CD8-positive, alpha-beta T cell (primary cell): ENCODE measurements at regions of chr1 and their contacts with region 1.

Region 1: DNA sequence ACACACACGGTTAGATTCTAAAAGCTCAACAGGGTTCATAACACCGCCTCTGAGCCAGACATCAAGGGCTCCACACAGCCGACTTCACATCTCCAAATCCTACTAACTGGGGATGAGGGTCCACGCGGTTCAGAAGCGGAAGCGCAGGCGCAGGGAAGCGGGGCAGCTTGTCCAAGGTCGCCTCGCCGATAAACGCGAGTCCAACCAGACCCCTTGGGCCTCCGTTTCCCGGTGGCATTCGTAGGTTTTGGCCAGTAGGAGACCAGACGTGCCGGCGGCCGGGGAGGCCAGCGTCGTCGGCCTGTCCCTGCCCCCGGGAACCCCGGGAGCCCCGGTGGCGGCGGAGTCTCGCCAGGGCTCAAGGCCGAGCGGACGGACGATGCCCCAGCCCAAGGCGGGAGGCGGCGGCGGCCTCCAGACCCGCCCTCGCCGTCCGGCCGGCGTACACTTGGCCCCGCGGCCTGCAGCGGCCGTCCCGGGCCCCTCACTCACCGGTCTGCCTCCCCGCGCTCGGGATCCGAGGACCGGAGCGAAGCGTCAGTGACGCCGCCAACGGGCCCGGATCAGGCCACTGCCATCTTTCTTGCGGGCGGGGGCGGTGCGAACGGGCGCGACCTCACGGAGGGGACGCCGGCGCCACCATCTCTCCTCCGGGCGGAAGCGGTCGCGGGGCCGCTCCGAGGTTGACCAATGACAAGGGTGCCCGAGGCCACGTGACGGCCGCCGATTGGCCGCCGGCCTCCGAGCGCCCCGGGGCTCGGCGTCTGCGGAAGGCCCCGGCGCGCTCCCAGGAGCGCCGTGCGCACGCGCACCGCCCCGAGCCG is at the start of gene SDF4:
- DNase-seq: peak; percentile 91 to 99 (median 96)
- ATAC-seq: peak; percentile 93
- H3K4me3 ChIP-seq: peak within 1 kb of the TSS; percentile 92 to 96
- H3K4me3 Mint-ChIP-seq: peak within 1 kb of the TSS; percentile 93
- H3K27ac ChIP-seq: peak within 1 kb of the TSS; percentile 80 to 88
- H3K27ac Mint-ChIP-seq: peak within 1 kb of the TSS; percentile 92
- H3K4me1 ChIP-seq: peaks cover 40% of the 10 kb centered on the region
- H3K4me1 Mint-ChIP-seq: peaks cover 39% of the 10 kb centered on the region
- H3K27me3 ChIP-seq: no peaks in the 10 kb centered on the region
- H3K27me3 Mint-ChIP-seq: no peaks in the 10 kb centered on the region
- CTCF ChIP-seq: no peak
- total RNA-seq, gene SDF4: 66.6 to 70.3 TPM

Region 2: GRCh38 chr1:1157914-1158710 is 73.5 kb before region 1 on chr1:
- CTCF ChIA-PET with region 1: no interaction called
- POLR2A ChIA-PET with region 1: no interaction called
- intact Hi-C with region 1: loop called in 1 of 2 experiments (anchors 1 kb)
- DNase-seq: peak in 5 of 9 experiments; percentile 36 to 75 (median 58)
- ATAC-seq: peak; percentile 75
- H3K4me3 ChIP-seq: peak overlapping the region; percentile 71 to 90
- H3K4me3 Mint-ChIP-seq: peak overlapping the region; percentile 78
- H3K27ac ChIP-seq: peak overlapping the region; percentile 70 to 87
- H3K27ac Mint-ChIP-seq: no peak overlapping the region
- H3K4me1 ChIP-seq: peaks cover 10% of the 10 kb centered on the region
- H3K4me1 Mint-ChIP-seq: peaks cover 2% of the 10 kb centered on the region
- H3K27me3 ChIP-seq: no peaks in the 10 kb centered on the region
- H3K27me3 Mint-ChIP-seq: no peaks in the 10 kb centered on the region
- CTCF ChIP-seq: no peak

Region 3: DNA sequence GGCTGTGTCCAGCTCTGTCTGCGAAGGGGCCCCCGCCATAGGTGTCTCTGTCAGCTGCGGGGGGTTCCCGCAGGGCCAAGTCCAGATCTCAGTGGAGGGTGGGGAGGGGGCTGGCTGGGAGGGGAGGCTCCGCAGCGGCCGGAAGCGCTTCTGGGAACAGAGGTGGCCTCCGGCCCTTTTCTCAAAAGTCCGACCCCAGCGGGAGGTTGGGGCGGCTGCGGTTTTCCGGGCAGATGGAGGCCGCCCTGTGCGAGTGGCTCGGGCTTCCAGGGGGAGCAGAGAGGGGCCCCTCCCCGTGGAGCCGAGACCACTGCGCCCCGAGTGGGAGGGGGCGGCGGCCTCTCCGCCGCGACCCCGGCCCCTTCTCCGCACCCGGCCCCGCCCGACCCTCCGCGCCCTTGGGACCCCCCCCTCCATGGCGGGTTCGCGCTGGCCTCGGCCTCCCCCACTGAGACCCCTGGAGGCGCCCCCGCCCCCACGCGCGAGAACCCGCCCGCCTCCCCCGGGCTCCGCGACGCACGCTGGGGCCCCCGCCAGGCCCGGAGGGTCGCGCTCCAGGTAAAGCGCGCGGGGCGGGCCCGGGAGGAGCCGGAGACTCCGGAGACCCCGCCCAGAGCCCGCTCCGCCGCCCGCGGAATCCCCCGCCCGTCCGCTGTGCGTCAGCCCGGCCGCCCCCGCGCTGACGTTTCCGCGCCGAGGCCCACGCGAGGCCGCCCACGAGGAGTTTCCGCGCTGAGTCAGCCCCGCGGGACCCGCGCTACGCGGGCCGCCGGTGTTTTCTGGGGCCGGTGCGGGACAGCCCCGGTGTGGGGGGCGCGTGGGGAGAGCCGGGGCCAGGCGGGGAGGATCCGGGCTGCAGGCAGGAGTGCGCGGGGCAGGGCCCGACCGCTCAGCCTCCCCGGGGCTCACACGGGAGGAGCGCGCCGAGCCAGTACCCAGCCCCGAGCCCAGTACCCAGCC is 30.5 kb before region 1 on chr1:
- CTCF ChIA-PET with region 1: no interaction called
- POLR2A ChIA-PET with region 1: no interaction called
- intact Hi-C with region 1: loop called in 1 of 2 experiments (anchors 1 kb)
- DNase-seq: peak; percentile 64 to 96 (median 82)
- ATAC-seq: peak; percentile 88
- H3K4me3 ChIP-seq: peak overlapping the region; percentile 15 to 28
- H3K4me3 Mint-ChIP-seq: peak overlapping the region; percentile 55
- H3K27ac ChIP-seq: peak overlapping the region in 1 of 2 experiments; percentile 54
- H3K27ac Mint-ChIP-seq: no peak overlapping the region
- H3K4me1 ChIP-seq: peaks cover 12% of the 10 kb centered on the region
- H3K4me1 Mint-ChIP-seq: peaks cover 3% of the 10 kb centered on the region
- H3K27me3 ChIP-seq: peaks cover 0 to 10% of the 10 kb centered on the region in 2 experiments
- H3K27me3 Mint-ChIP-seq: no peaks in the 10 kb centered on the region
- CTCF ChIP-seq: no peak

Region 4: DNA sequence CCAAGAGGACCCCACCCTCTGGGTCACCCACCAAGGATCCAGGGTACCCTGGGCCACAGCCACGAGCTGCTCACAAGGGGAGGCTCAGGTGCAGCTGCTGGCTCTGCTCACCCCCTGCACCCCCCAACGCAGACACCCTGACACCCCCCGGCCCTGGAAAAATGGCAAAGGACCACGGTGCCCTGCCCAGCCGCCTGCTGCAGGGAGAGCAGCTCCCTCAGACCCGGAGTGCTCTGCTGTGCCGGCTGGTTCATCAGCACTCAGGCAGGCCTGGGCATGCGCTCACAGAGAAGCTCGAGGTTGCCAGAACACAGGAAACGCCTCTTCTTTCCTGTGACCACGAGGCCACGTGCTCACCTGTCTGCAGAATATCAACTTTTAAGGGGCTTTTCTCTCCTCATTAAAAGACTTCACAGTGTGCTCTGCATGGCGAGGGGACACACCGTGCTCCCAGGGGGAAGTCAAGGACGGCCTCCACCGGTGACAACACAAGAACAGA is 19.2 kb after region 1 on chr1:
- CTCF ChIA-PET with region 1: no interaction called
- POLR2A ChIA-PET with region 1: interaction called, 3 read pairs
- intact Hi-C with region 1: loop called (anchors 1 to 2 kb)
- DNase-seq: peak; percentile 30 to 91 (median 74)
- ATAC-seq: peak; percentile 99
- H3K4me3 ChIP-seq: peak overlapping the region in 1 of 2 experiments; percentile 10
- H3K4me3 Mint-ChIP-seq: peak overlapping the region; percentile 72
- H3K27ac ChIP-seq: peak overlapping the region; percentile 40 to 63
- H3K27ac Mint-ChIP-seq: peak overlapping the region; percentile 93
- H3K4me1 ChIP-seq: peaks cover 25% of the 10 kb centered on the region
- H3K4me1 Mint-ChIP-seq: peaks cover 15% of the 10 kb centered on the region
- H3K27me3 ChIP-seq: peaks cover 0 to 6% of the 10 kb centered on the region in 2 experiments
- H3K27me3 Mint-ChIP-seq: no peaks in the 10 kb centered on the region
- CTCF ChIP-seq: no peak

Region 5: GRCh38 chr1:1273512-1274298 is 42.1 kb after region 1 on chr1 and contains the start of gene UBE2J2:
- CTCF ChIA-PET with region 1: no interaction called
- POLR2A ChIA-PET with region 1: interaction called, 6 read pairs
- intact Hi-C with region 1: loop called in 1 of 2 experiments (anchors 1 kb)
- DNase-seq: peak; percentile 86 to 96 (median 93)
- ATAC-seq: peak; percentile 95
- H3K4me3 ChIP-seq: peak within 1 kb of the TSS; percentile 69 to 91
- H3K4me3 Mint-ChIP-seq: peak within 1 kb of the TSS; percentile 88
- H3K27ac ChIP-seq: peak within 1 kb of the TSS; percentile 53 to 63
- H3K27ac Mint-ChIP-seq: peak within 1 kb of the TSS; percentile 89
- H3K4me1 ChIP-seq: peaks cover 39% of the 10 kb centered on the region
- H3K4me1 Mint-ChIP-seq: peaks cover 40% of the 10 kb centered on the region
- H3K27me3 ChIP-seq: no peaks in the 10 kb centered on the region
- H3K27me3 Mint-ChIP-seq: no peaks in the 10 kb centered on the region
- CTCF ChIP-seq: no peak
- total RNA-seq, gene UBE2J2: 46.4 to 50.7 TPM

Region 6: DNA sequence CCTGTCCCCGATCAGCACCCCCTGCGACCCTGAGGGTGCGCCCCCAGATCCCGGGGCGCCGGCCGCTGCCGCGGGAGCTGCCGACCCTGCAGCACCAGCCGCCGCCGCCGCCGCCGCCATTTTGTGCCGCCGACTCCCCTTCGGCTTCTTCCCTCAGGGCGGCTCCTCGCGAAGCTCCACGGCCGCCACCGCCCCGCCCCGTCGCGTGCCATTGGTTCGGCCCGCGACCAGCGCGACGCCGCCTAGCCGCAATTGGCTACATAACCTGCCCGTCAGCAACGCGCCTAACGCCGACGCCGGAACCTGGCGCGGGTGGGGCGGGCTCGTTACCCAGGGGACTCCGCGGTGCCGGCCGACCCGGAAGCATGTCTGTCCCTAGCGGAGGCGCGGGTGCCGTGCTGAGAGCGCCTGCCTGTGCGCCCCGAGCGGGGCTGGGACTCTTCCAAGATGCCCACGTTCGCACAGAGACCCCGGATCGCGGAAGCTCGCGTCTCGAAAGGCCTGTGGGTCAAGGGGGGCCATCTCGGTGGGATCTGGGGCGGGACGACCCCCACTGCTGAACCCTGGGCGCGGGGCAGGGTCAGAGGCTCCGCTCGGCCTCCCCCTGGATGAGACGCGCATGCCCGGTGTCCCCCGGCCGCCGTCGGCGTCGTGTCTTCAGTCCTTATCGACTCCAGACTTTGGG is 167.7 kb after region 1 on chr1 and contains the start of gene CCNL2:
- CTCF ChIA-PET with region 1: no interaction called
- POLR2A ChIA-PET with region 1: no interaction called
- intact Hi-C with region 1: loop called in 1 of 2 experiments (anchors 5 kb)
- DNase-seq: peak; percentile 99 to 100 (median 99)
- ATAC-seq: peak; percentile 95
- H3K4me3 ChIP-seq: peak within 1 kb of the TSS; percentile 92 to 96
- H3K4me3 Mint-ChIP-seq: peak within 1 kb of the TSS; percentile 89
- H3K27ac ChIP-seq: peak within 1 kb of the TSS; percentile 81 to 92
- H3K27ac Mint-ChIP-seq: peak within 1 kb of the TSS; percentile 89
- H3K4me1 ChIP-seq: peaks cover 30% of the 10 kb centered on the region
- H3K4me1 Mint-ChIP-seq: peaks cover 45% of the 10 kb centered on the region
- H3K27me3 ChIP-seq: no peaks in the 10 kb centered on the region
- H3K27me3 Mint-ChIP-seq: no peaks in the 10 kb centered on the region
- CTCF ChIP-seq: peak; percentile 55
- total RNA-seq, gene CCNL2: 307 to 328 TPM